HepG2 (cell line): ENCODE measurements at regions of chr10 and their contacts with region 1.

Region 1: DNA sequence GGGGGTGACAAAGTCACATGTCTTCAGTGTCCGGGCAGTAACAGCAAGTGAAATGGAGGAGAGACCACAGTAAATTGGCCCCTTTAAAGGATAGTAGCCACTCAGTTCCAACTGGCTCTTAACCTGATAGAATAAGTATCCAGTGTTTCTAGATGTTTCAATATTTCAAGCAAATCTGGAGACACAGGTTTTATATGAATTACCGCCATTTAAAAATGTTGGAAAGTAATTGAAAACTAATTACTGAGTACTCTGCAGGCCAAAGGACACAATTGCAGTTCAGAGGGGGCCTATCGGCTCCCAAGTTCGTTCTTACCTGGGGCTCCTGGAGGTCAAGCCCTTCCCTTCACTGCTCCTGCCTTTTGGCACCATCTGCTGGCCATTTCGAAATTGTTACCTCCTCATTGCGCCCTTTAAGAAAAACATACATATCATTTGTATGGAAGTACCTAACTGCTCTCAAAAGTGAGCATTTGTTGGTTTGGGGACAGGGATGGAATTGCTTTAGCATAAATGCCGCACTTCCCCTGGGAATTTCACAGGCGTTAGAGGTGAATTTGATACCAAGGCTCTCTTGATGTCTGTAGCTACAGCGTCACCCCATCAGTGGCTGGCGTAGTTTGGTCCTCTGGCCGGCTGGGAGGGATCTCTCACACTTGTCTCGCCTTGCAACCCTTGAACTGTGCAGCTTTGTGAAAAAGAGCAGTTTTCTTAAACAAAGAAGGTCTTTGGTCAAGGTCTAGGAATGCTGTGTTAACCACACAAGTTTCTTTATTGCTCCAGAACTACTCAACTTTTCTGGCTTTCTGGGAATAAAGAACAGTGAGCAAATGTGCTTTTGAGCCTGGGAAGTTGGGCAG is 220.0 kb downstream of the ARHGAP21 start:
- DNase-seq: peak; percentile 63
- ATAC-seq: peak; percentile 95
- H3K4me3 ChIP-seq: no peak overlapping the region
- H3K27ac ChIP-seq: no peak overlapping the region
- H3K4me1 ChIP-seq: no peaks in the 10 kb centered on the region
- H3K27me3 ChIP-seq: no peaks in the 10 kb centered on the region
- CTCF ChIP-seq: peak; percentile 77
- EP300 ChIP-seq: no peak
- POLR2A ChIP-seq: no peak
- RAD21 ChIP-seq: peak; percentile 72

Region 2: DNA sequence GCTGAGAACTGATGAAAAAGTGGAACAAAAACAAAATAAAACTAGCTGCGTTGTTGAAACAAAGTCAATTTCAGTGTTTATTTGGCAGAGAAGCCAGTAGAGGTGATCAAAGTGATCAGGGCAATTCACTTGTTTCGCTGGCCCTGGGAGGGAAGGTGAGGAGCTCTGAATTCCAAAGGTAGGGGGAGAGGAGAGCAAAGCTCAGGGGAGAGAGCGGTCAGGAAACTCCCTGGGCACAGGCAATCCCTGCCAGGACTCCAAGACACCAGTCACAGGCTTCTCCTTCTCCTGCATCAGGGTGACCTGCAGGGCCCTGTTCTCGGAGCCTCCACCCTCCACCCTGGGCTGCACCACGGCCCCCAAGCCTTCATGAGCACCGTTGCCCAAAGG is 301.5 kb before region 1 on chr10:
- CTCF ChIA-PET with region 1: no interaction called
- POLR2A ChIA-PET with region 1: no interaction called
- in situ Hi-C with region 1: no loop called
- intact Hi-C with region 1: loop called (anchors 5 kb)
- DNase-seq: peak; percentile 67
- ATAC-seq: peak; percentile 93
- H3K4me3 ChIP-seq: peak overlapping the region; percentile 39 to 67 (median 48); a peak in 5 of 6 replicates
- H3K27ac ChIP-seq: no peak overlapping the region
- H3K4me1 ChIP-seq: peaks cover 38% of the 10 kb centered on the region
- H3K27me3 ChIP-seq: no peaks in the 10 kb centered on the region
- CTCF ChIP-seq: no peak
- EP300 ChIP-seq: no peak
- POLR2A ChIP-seq: peak in 1 of 2 experiments; percentile 45; a peak in 1 of 4 replicates
- RAD21 ChIP-seq: no peak

Region 3: DNA sequence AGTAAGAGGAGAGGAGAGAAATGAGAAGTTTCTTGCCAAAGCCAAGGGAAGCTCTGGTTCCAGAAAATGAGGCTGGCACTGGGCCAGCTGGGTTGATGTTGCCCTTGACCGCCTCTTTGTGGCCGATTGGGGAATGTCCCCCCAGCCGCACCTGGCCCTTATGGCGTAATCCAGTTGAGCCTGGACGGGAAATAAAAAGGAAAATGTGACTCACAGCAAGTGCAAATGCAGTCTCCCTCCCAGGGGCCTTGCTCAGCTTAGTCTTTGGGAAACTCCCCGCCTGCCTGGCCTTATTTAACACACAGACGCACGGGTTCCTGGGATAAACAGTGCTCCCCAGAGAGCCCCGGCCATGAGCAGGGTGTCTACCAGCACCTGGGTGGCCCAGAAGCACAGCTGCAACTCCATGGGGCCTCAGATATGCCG is 120.0 kb before region 1 on chr10:
- CTCF ChIA-PET with region 1: no interaction called
- POLR2A ChIA-PET with region 1: no interaction called
- in situ Hi-C with region 1: no loop called
- intact Hi-C with region 1: loop called (anchors 1 kb)
- DNase-seq: peak; percentile 63
- ATAC-seq: peak; percentile 81
- H3K4me3 ChIP-seq: no peak overlapping the region
- H3K27ac ChIP-seq: no peak overlapping the region
- H3K4me1 ChIP-seq: peaks cover 15% of the 10 kb centered on the region
- H3K27me3 ChIP-seq: no peaks in the 10 kb centered on the region
- CTCF ChIP-seq: peak; percentile 61
- EP300 ChIP-seq: no peak
- POLR2A ChIP-seq: no peak
- RAD21 ChIP-seq: no peak

Region 4: GRCh38 chr10:24414597-24414996 is 89.1 kb before region 1 on chr10:
- CTCF ChIA-PET with region 1: interaction called, 3 read pairs
- POLR2A ChIA-PET with region 1: no interaction called
- in situ Hi-C with region 1: no loop called
- intact Hi-C with region 1: loop called (anchors 5 kb)
- DNase-seq: no peak
- ATAC-seq: no peak
- H3K4me3 ChIP-seq: no peak overlapping the region
- H3K27ac ChIP-seq: no peak overlapping the region
- H3K4me1 ChIP-seq: peaks cover 9% of the 10 kb centered on the region
- H3K27me3 ChIP-seq: no peaks in the 10 kb centered on the region
- CTCF ChIP-seq: no peak
- EP300 ChIP-seq: no peak
- POLR2A ChIP-seq: no peak
- RAD21 ChIP-seq: no peak

Region 5: GRCh38 chr10:24449321-24449740 is 54.4 kb before region 1 on chr10:
- CTCF ChIA-PET with region 1: no interaction called
- POLR2A ChIA-PET with region 1: no interaction called
- in situ Hi-C with region 1: no loop called
- intact Hi-C with region 1: no loop called
- DNase-seq: no peak
- ATAC-seq: no peak
- H3K4me3 ChIP-seq: no peak overlapping the region
- H3K27ac ChIP-seq: no peak overlapping the region
- H3K4me1 ChIP-seq: no peaks in the 10 kb centered on the region
- H3K27me3 ChIP-seq: no peaks in the 10 kb centered on the region
- CTCF ChIP-seq: no peak
- EP300 ChIP-seq: no peak
- POLR2A ChIP-seq: no peak
- RAD21 ChIP-seq: no peak

Region 6: DNA sequence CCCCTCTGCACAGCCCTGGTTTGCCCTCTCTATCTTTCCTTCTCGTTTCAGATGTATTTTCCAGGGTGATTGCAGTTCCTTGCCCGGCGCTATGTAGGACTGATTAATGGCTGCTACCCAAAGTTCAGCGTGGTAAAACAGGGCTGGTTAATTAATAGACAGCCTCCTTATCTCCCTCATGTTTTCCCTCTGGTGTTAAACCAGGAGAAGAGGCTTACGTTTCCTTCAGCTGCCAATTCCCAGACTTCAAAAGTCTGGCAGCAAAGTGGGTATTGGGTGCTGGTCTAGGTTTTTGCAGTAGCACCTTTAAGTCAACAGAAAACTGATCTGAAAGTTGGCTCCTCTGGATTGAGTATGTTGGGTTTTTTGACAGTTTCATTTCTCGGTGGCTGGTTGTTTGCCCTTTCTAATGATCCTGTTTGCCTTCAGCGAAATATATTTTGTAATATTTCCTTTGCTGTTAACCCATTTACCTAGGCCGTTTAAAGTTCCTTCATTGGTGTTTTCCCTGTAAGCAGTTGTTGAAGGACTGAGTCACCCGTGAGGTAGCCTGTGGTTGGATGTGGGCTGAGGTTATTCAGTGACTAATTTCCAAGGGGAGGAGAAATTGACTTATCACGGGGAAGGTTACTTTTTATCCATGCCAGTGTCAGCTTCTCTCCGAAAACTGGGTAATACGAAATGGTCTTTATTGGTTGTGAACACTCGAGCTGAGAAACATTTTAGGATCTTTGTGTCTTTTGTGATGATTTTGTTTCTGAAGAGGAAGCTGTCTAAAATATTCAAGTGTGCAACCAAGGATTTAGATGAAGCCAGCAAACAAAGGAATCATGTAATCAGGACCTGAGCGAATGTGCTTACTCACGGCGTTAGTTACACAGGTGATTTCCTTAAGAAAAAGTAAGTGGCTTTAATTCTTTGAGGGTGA is 37.5 kb before region 1 on chr10:
- CTCF ChIA-PET with region 1: interaction called, 3 read pairs
- POLR2A ChIA-PET with region 1: no interaction called
- in situ Hi-C with region 1: no loop called
- intact Hi-C with region 1: loop called (anchors 1 kb)
- DNase-seq: peak; percentile 92
- ATAC-seq: peak; percentile 96
- H3K4me3 ChIP-seq: peak overlapping the region; percentile 63 to 72 (median 67)
- H3K27ac ChIP-seq: peak overlapping the region; percentile 94
- H3K4me1 ChIP-seq: peaks cover 53% of the 10 kb centered on the region
- H3K27me3 ChIP-seq: no peaks in the 10 kb centered on the region
- CTCF ChIP-seq: no peak
- EP300 ChIP-seq: peak in 1 of 2 experiments; percentile 13; a peak in 1 of 4 replicates
- POLR2A ChIP-seq: peak; percentile 62 to 72
- RAD21 ChIP-seq: no peak

Region 7: DNA sequence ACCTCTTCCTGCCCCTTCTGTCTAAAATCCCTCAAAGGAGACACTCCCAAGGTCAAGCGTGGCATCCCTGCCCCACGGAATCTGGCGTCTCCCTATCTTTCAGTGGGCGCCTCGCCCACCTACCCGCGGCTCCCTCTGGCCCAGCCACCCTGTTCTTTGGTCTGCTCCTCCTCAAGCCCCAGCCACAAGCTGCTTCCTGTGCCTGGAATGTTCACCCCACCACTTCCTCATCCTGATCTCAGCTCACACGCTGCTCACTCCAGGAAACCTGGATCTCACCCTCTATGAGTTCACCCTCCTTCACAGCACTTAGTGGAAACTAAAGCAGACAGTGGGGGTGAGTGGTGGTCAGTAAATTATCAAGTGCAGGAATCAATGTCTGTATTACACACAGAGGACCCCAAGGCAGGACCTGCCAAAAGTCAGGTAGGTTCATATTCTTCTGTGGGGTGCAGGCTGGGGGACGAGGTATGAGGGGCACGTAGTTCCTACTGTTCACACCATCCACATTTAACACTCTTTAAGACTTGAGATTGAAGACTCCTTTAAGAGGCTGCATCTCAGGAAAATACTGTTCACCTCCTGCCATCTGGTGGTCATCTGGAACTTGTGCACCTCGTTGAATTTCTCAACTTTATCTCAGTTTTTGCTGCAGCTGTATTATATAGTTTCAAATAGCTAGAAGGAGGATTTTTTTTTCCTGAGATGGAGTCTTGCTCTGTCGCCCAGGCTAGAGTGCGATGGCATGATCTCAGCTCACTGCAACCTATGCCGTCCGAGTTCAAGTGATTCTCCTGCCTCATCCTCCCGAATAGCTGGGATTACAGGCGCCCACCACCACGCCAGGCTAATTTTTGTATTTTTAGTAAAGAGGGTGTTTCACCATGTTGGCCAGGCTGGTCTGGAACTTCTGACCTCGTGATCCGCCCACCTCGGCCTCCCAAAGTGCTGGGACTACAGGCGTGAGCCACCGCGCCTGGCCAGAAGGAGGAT is 53.4 kb after region 1 on chr10:
- CTCF ChIA-PET with region 1: interaction called, 4 read pairs
- POLR2A ChIA-PET with region 1: no interaction called
- in situ Hi-C with region 1: no loop called
- intact Hi-C with region 1: loop called (anchors 5 kb)
- DNase-seq: peak; percentile 43
- ATAC-seq: peak; percentile 37
- H3K4me3 ChIP-seq: 0 out of 6 replicates have a peak overlapping the region, but pooled peaks of 1 of the 3 experiments have one; percentile 8
- H3K27ac ChIP-seq: no peak overlapping the region
- H3K4me1 ChIP-seq: peaks cover 42% of the 10 kb centered on the region
- H3K27me3 ChIP-seq: no peaks in the 10 kb centered on the region
- CTCF ChIP-seq: peak; percentile 82
- EP300 ChIP-seq: no peak
- POLR2A ChIP-seq: no peak
- RAD21 ChIP-seq: peak; percentile 64